ENCODE measurements at regions of chr9 and their contacts with region 1.

Region 1: GRCh38 chr9:137295238-137295811 is 6.7 kb downstream of the NRARP start:
- DNase-seq: peak in 7 of 9 donors; percentile 36 to 80 (median 54)
- ATAC-seq: peak; percentile 92
- H3K4me3 ChIP-seq: peak overlapping the region; percentile 27
- H3K4me3 Mint-ChIP-seq: peak overlapping the region in 8 of 10 donors; percentile 5 to 76 (median 54)
- H3K27ac ChIP-seq: no peak overlapping the region
- H3K27ac Mint-ChIP-seq: no peak overlapping the region
- H3K4me1 ChIP-seq: peaks cover under 1 to 6% of the 10 kb centered on the region in 2 donors
- H3K4me1 Mint-ChIP-seq: peaks cover 0 to 15% (median 9%) of the 10 kb centered on the region in 7 donors
- H3K27me3 ChIP-seq: peaks cover 12 to 30% of the 10 kb centered on the region in 2 donors
- H3K27me3 Mint-ChIP-seq: peaks cover 22 to 45% (median 26%) of the 10 kb centered on the region in 5 donors

Region 2: GRCh38 chr9:137277329-137278041 is 17.8 kb before region 1 on chr9 and contains the start of gene TOR4A:
- CTCF ChIA-PET with region 1: no interaction called
- POLR2A ChIA-PET with region 1: no interaction called
- intact Hi-C with region 1: no loop called
- DNase-seq: peak in 1 of 9 donors; percentile 60
- ATAC-seq: peak; percentile 86
- H3K4me3 ChIP-seq: peak within 1 kb of the TSS; percentile 43
- H3K4me3 Mint-ChIP-seq: peak within 1 kb of the TSS in 8 of 10 donors; percentile 35 to 89 (median 56)
- H3K27ac ChIP-seq: peak within 1 kb of the TSS; percentile 41
- H3K27ac Mint-ChIP-seq: peak within 1 kb of the TSS in 1 of 9 donors; percentile 89
- H3K4me1 ChIP-seq: peaks cover 0 to 16% of the 10 kb centered on the region in 2 donors
- H3K4me1 Mint-ChIP-seq: peaks cover 6 to 23% (median 15%) of the 10 kb centered on the region in 7 donors
- H3K27me3 ChIP-seq: no peaks in the 10 kb centered on the region
- H3K27me3 Mint-ChIP-seq: peaks cover 0 to 1% (median 0%) of the 10 kb centered on the region in 5 donors
- total RNA-seq, gene TOR4A: 0.84 to 16.6 (median 2.3) TPM

Region 3: DNA sequence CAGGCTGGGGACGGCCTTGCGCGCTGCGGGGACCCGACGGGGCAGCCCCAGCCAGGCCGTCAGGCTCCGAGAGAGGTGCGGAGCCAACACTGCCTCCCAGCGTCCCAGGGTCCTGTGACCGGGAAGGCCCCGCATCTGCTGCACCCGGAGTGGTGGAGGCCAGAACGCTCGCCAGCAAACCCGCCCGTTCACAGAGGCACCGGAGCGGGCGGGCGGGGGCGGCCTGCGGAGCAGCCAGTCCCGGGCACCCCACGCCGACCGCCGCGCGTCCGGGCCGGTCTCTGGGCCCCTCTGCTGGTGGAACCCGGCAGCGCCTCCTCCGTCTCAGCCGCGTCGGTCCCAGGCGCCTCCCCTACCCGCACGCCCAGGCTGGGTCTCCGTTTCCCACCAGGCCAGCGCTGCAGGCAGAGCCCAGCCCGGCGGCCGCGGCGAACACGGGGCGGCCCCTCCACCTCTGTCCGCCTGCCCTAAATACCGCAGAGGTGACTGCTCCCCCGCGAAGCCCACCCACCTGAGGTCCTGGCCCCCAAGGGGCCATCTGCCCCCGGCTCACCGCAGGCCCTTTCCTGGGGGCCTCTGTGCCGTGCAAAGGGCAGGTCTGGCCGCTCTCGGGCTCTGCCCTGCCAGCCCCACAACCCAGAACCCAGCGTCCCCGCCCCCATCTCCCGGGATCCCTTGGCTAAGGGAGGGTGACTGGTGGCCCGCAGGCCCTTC is 111.7 kb after region 1 on chr9:
- CTCF ChIA-PET with region 1: interaction called, 3 read pairs
- POLR2A ChIA-PET with region 1: no interaction called
- intact Hi-C with region 1: loop called (anchors 1 to 2 kb)
- DNase-seq: peak; percentile 34 to 76 (median 48)
- ATAC-seq: peak; percentile 88
- H3K4me3 ChIP-seq: no peak overlapping the region
- H3K4me3 Mint-ChIP-seq: peak overlapping the region in 1 of 10 donors; percentile 61
- H3K27ac ChIP-seq: no peak overlapping the region
- H3K27ac Mint-ChIP-seq: no peak overlapping the region
- H3K4me1 ChIP-seq: peaks cover 3% of the 10 kb centered on the region in 2 donors
- H3K4me1 Mint-ChIP-seq: peaks cover 0 to 12% (median 6%) of the 10 kb centered on the region in 7 donors
- H3K27me3 ChIP-seq: no peaks in the 10 kb centered on the region
- H3K27me3 Mint-ChIP-seq: peaks cover 0 to 4% (median 0%) of the 10 kb centered on the region in 5 donors

Region 4: DNA sequence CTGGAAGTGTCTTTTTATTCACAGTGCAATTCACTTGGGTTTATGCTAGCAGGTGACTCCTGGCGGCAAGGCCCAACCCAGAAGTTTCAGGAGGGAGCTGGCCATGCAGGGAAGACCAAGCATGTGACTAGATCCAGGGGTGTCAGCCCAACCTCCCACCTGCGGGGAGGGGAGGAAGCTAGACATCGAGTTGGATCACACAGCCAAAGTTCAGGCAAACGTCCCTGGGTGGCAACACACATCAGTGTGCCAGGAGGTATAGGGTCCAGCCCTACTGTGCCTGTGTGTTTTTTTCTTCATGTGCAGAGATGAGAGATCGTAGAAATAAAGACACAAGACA is 229.6 kb after region 1 on chr9:
- CTCF ChIA-PET with region 1: no interaction called
- POLR2A ChIA-PET with region 1: no interaction called
- intact Hi-C with region 1: loop called (anchors 5 to 10 kb)
- DNase-seq: no peak
- ATAC-seq: no peak
- H3K4me3 ChIP-seq: no peak overlapping the region
- H3K4me3 Mint-ChIP-seq: no peak overlapping the region
- H3K27ac ChIP-seq: no peak overlapping the region
- H3K27ac Mint-ChIP-seq: peak overlapping the region in 1 of 9 donors; percentile 56
- H3K4me1 ChIP-seq: no peaks in the 10 kb centered on the region
- H3K4me1 Mint-ChIP-seq: peaks cover 0 to 6% (median 5%) of the 10 kb centered on the region in 7 donors
- H3K27me3 ChIP-seq: no peaks in the 10 kb centered on the region
- H3K27me3 Mint-ChIP-seq: peaks cover 0 to 10% (median 0%) of the 10 kb centered on the region in 5 donors

Measured in naive thymus-derived CD4-positive, alpha-beta T cell (primary cell).